ENCODE measurements at regions of chr1 and their contacts with region 1.

Region 1: DNA sequence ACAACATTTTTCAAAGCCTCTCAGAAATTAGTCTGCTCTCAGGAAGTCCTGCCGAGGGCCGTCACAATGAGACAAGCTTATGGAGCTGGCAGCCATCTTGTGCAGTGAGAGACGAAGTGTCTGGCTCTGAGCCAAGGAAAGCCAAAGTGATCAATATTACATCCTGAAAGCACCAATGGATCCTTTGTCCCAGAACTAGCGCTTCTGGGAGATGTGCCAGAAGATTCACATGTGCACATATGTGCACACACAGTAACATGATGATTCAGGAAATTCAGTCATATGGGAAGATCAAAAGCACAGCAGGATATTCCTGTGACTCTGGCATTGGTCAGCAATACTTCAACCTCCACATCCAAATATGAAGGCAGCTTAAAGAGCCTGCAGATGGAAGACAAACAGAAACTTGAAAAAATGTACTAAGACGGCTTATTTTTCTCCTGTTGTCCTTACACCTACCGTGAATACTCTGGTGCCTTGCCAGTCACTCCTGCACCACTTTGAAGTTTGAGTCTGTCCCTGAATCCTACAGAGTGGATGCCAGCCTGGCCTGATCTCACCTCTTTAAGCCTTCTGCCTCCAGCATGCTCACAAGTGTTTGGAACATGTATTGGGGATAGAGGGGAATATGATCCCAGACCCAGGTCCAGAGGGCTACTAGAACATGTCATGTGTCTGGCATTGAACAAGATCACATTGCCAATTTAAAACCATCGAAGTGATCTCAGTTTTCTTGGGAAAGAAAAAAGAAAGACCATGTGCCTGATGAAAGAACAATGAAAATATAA is 44.5 kb upstream of the PRRX1 start:
- DNase-seq: no peak
- ATAC-seq: peak; percentile 64 to 73 (median 68)
- H3K4me3 ChIP-seq: peak overlapping the region; percentile 40
- H3K27ac ChIP-seq: peak overlapping the region; percentile 75
- H3K4me1 ChIP-seq: peaks cover 30% of the 10 kb centered on the region
- H3K27me3 ChIP-seq: no peaks in the 10 kb centered on the region
- CTCF ChIP-seq: no peak

Region 2: GRCh38 chr1:170436928-170437327 is 182.5 kb before region 1 on chr1:
- intact Hi-C with region 1: no loop called
- DNase-seq: no peak
- ATAC-seq: no peak
- H3K4me3 ChIP-seq: no peak overlapping the region
- H3K27ac ChIP-seq: no peak overlapping the region
- H3K4me1 ChIP-seq: no peaks in the 10 kb centered on the region
- H3K27me3 ChIP-seq: no peaks in the 10 kb centered on the region
- CTCF ChIP-seq: no peak

Region 3: DNA sequence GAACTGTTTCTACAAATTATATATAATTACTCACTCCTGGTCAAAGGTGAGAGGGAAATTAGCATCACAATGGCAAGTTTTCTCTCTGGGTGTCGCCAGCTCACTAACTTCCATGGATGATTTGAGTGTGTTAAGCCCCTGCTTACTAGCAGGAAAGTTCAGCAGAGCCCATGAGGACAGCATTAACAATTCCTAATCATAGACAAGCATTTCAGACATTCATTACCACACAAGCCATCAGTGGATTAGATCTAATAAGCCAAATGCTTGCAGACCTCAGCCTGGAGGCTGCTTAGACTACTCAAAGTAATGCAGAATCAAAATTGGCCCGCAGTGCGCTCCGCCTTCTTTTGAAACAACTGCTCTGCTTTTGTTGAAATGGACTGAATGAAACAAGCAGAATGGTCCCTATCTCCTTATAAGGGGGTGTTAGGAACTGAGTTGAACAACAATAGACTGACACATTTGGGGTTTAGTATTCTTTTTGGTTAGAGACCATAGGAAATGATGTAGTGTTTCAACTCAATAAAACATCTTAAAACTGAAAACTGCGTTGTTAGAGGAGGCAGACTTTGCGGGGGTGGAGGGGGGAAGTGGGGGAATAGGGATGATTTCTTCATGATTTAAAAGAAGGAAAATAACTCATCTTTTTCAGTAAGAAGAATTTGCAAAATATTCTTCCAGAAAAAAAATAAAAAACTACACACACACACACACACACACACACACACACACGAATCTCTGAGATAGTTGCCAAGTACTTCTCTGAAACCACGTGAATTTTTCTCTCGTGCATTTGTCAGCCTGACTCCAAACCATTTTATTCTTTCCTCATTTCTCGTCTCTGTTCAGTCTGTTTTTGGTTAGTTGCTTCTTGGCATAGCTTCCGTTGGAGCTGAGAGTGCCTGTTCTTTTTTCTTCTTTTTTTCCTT is 32.8 kb before region 1 on chr1:
- intact Hi-C with region 1: no loop called
- DNase-seq: peak in 1 of 2 donors; percentile 44
- ATAC-seq: peak in 3 of 4 donors; percentile 17 to 37 (median 33)
- H3K4me3 ChIP-seq: peak overlapping the region; percentile 22
- H3K27ac ChIP-seq: peak overlapping the region; percentile 32
- H3K4me1 ChIP-seq: peaks cover 5% of the 10 kb centered on the region
- H3K27me3 ChIP-seq: no peaks in the 10 kb centered on the region
- CTCF ChIP-seq: no peak

Region 4: GRCh38 chr1:170657275-170657853 is 37.9 kb after region 1 on chr1:
- intact Hi-C with region 1: loop called (anchors 1 to 5 kb)
- DNase-seq: no peak
- ATAC-seq: no peak
- H3K4me3 ChIP-seq: no peak overlapping the region
- H3K27ac ChIP-seq: no peak overlapping the region
- H3K4me1 ChIP-seq: no peaks in the 10 kb centered on the region
- H3K27me3 ChIP-seq: peaks cover 0 to 3% (median 0%) of the 10 kb centered on the region in 3 donors
- CTCF ChIP-seq: no peak

Measured in psoas muscle (tissue), 8 donors.